Activated CD8-positive, alpha-beta T cell treated with anti-CD3 and anti-CD28 coated beads for 36 hours (primary cell): ENCODE measurements at regions of chr14 and their contacts with region 1.

Region 1: GRCh38 chr14:56491299-56492285 is 88.0 kb upstream of the TMEM260 start:
- DNase-seq: peak; percentile 59
- ATAC-seq: peak; percentile 80
- H3K4me3 Mint-ChIP-seq: no peak overlapping the region
- H3K27ac Mint-ChIP-seq: no peak overlapping the region
- H3K4me1 Mint-ChIP-seq: peaks cover 10% of the 10 kb centered on the region
- H3K27me3 Mint-ChIP-seq: peaks cover 6% of the 10 kb centered on the region
- CTCF ChIP-seq: peak; percentile 53

Region 2: DNA sequence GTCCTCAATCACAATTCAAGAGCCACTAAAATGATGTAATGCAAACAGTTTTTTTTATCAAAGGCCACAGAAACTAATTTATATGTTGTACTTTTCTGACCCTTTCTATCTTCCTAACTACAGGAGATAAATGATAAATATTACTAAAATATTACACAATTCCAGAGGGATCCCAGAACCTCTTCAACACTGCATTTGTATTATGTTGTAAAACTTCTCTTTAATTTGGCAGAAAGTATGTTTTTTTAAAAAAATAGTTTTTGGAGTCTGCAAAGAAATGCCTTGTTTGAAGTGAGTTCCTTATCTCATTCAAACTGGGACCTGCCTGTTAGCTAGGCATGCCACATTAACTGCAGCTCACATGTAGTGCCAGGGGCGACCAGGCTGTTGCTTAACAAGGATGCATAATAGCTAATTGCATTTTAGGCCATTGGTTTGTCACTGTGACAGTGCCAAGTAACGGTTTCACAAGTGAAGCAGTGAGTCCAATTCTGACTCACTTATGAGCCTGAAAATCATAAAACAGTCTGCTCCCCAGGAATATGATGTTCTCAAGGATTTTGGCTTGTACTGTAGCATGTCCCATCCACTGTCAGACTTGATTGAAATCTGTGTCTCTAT is 644.7 kb before region 1 on chr14:
- CTCF ChIA-PET with region 1: no interaction called
- POLR2A ChIA-PET with region 1: no interaction called
- intact Hi-C with region 1: no loop called
- DNase-seq: no peak
- ATAC-seq: no peak
- H3K4me3 Mint-ChIP-seq: no peak overlapping the region
- H3K27ac Mint-ChIP-seq: no peak overlapping the region
- H3K4me1 Mint-ChIP-seq: peaks cover 2% of the 10 kb centered on the region
- H3K27me3 Mint-ChIP-seq: peaks cover 2% of the 10 kb centered on the region
- CTCF ChIP-seq: no peak

Region 3: DNA sequence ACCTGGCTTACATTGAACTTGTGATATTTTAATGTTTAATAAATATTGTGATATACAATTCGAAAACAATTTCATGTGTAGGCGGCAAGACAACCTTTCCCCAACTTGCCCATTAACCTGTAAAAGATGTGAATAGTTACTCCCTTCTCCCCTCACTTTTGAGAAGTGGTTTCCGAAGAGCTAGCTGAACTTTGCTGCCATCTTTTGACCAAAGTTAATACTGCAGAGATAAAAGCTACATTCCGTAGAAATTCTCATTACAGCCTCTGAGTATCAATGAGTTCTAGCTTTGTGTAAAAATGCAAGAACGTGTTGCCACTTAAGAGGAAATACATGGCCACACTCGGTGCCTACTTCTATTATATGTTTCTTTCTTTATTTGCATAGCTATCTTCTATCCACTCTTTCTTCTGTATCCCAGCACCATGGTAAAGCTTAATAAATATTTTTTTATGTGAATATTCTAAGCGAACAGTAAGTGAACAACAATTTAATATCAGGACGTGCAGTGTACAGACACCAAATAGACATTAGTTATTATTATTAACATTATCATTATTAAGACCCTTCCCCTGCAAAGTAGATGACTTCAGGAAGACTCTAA is 17.1 kb before region 1 on chr14:
- CTCF ChIA-PET with region 1: interaction called, 18 read pairs
- POLR2A ChIA-PET with region 1: no interaction called
- intact Hi-C with region 1: no loop called
- DNase-seq: no peak
- ATAC-seq: peak; percentile 66
- H3K4me3 Mint-ChIP-seq: no peak overlapping the region
- H3K27ac Mint-ChIP-seq: no peak overlapping the region
- H3K4me1 Mint-ChIP-seq: no peaks in the 10 kb centered on the region
- H3K27me3 Mint-ChIP-seq: no peaks in the 10 kb centered on the region
- CTCF ChIP-seq: peak; percentile 72

Region 4: GRCh38 chr14:56501909-56502530 is 10.4 kb after region 1 on chr14:
- CTCF ChIA-PET with region 1: interaction called, 12 read pairs
- POLR2A ChIA-PET with region 1: no interaction called
- intact Hi-C with region 1: no loop called
- DNase-seq: no peak
- ATAC-seq: no peak
- H3K4me3 Mint-ChIP-seq: no peak overlapping the region
- H3K27ac Mint-ChIP-seq: no peak overlapping the region
- H3K4me1 Mint-ChIP-seq: no peaks in the 10 kb centered on the region
- H3K27me3 Mint-ChIP-seq: peaks cover 4% of the 10 kb centered on the region
- CTCF ChIP-seq: no peak

Region 5: GRCh38 chr14:56555921-56556570 is 64.5 kb after region 1 on chr14:
- CTCF ChIA-PET with region 1: interaction called, 11 read pairs
- POLR2A ChIA-PET with region 1: no interaction called
- intact Hi-C with region 1: no loop called
- DNase-seq: no peak
- ATAC-seq: no peak
- H3K4me3 Mint-ChIP-seq: no peak overlapping the region
- H3K27ac Mint-ChIP-seq: no peak overlapping the region
- H3K4me1 Mint-ChIP-seq: no peaks in the 10 kb centered on the region
- H3K27me3 Mint-ChIP-seq: peaks cover 15% of the 10 kb centered on the region
- CTCF ChIP-seq: no peak

Region 6: DNA sequence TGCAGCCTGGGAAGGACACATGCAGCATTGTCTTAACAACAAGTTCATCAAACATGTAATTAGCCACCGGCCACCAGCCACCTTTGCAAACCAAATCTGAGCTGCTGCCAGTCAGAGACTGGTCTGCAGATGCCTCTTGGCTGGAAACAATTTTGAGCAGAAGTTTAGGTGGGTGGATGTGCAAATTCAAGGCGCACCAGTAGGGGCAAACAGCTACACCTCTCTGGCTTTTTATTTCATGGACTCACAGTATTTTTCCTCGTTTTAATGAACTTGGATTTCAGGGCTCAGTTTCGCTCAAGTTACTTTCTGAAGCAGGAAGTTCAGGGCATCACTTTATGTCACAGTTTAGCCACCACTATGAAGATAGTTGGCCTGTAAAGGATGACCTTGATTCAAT is 224.3 kb after region 1 on chr14:
- CTCF ChIA-PET with region 1: no interaction called
- POLR2A ChIA-PET with region 1: no interaction called
- intact Hi-C with region 1: no loop called
- DNase-seq: no peak
- ATAC-seq: no peak
- H3K4me3 Mint-ChIP-seq: no peak overlapping the region
- H3K27ac Mint-ChIP-seq: no peak overlapping the region
- H3K4me1 Mint-ChIP-seq: no peaks in the 10 kb centered on the region
- H3K27me3 Mint-ChIP-seq: peaks cover 2% of the 10 kb centered on the region
- CTCF ChIP-seq: no peak

Region 7: GRCh38 chr14:57066887-57067513 is 575.4 kb after region 1 on chr14:
- CTCF ChIA-PET with region 1: interaction called, 3 read pairs
- POLR2A ChIA-PET with region 1: no interaction called
- intact Hi-C with region 1: loop called (anchors 10 kb)
- DNase-seq: peak; percentile 69
- ATAC-seq: peak; percentile 45
- H3K4me3 Mint-ChIP-seq: no peak overlapping the region
- H3K27ac Mint-ChIP-seq: no peak overlapping the region
- H3K4me1 Mint-ChIP-seq: no peaks in the 10 kb centered on the region
- H3K27me3 Mint-ChIP-seq: peaks cover 27% of the 10 kb centered on the region
- CTCF ChIP-seq: peak; percentile 65

Region 8: DNA sequence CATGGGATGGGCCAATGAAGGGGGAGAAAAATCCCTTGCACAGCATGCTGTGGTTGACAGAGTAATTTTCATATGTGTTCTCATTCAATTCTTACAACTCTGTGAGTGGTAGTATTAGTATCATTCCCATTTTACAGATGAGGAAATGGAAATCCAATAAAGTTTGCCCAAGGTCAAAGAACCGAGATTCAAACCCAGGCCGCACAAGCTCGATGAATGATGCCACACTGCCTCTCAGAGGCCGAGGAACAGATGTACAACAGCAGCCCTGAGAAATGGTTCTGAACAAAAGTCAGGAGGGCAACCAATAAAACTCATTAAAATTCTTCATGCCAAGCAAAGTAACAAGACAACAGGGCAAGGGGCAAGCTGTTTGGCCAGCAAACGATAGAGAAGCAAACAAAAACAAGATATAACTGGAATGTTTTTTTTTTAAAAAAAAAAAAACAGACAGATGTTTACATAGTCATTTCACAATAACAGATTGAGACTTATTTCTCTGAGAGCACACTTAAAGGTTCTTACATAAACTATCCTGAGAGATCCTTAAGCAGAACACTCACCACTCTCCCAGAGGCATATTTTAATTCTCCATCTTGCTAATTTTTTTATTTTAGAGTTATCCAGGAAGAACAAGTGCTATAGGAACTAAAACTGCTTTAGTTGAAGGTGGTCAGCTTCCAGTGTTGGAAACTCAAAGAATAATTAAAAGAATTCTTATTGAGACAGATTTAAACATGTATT is 691.3 kb after region 1 on chr14:
- CTCF ChIA-PET with region 1: interaction called, 5 read pairs
- POLR2A ChIA-PET with region 1: no interaction called
- intact Hi-C with region 1: loop called (anchors 10 kb)
- DNase-seq: no peak
- ATAC-seq: no peak
- H3K4me3 Mint-ChIP-seq: no peak overlapping the region
- H3K27ac Mint-ChIP-seq: no peak overlapping the region
- H3K4me1 Mint-ChIP-seq: no peaks in the 10 kb centered on the region
- H3K27me3 Mint-ChIP-seq: peaks cover 15% of the 10 kb centered on the region
- CTCF ChIP-seq: no peak

Region 9: DNA sequence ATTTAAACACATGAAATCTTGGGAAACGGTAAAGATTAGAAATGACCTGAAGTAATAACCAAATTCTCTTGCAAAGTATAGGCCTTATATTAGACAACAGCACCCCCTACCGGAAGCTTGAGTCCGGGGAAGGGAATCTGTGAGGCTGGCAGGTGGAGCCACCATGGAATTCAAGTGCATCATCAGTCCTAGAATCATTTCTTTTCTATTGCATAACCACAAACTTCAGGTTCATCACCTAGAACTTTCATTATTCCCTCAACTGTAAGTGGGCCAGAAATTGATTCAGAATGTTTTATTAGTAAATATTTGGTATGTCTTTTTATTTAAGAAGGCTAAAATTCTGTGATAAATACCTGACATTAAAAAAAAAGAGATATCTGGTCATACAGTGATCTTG is 825.7 kb after region 1 on chr14:
- CTCF ChIA-PET with region 1: interaction called, 22 read pairs
- POLR2A ChIA-PET with region 1: no interaction called
- intact Hi-C with region 1: loop called (anchors 5 kb)
- DNase-seq: peak; percentile 81
- ATAC-seq: peak; percentile 72
- H3K4me3 Mint-ChIP-seq: no peak overlapping the region
- H3K27ac Mint-ChIP-seq: no peak overlapping the region
- H3K4me1 Mint-ChIP-seq: peaks cover 4% of the 10 kb centered on the region
- H3K27me3 Mint-ChIP-seq: peaks cover 5% of the 10 kb centered on the region
- CTCF ChIP-seq: peak; percentile 74